Esophagus squamous epithelium (tissue), 5 donors: ENCODE measurements at regions of chr16 and their contacts with region 1.

Region 1: DNA sequence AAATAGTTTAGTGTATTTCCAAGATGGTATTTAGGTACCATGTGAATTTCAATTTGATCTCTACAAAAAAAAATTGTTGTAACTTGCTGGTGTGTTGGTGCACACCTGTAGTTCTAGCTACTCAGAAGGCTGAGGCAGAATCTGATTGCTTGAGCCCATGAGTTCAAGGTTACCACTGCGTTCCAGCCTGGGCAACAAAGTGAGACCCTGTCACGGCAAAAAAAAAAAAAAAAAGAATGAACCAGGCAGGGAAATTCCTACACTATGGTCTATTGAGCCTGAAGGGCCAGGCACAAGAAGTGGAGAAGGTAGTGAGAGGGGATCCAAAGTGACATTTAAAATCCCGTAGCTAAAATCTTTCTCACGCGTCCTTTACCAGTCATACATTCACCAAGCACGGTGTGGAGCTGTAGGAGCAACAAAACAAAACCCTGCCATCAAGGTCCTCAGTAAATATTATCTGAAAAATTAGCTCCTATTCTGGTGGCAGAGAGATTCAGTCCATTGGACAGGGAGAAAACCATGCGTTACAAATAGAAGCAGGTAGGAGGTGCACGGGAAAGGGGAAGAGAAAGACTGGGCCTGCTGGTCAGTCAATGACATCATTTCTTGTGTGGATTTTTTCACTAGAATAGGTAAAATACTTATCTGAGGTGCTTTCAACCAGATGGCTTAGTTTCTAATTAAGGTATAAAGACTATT is 27.3 kb downstream of the TXNDC11 start:
- DNase-seq: no peak
- H3K4me3 ChIP-seq: no peak overlapping the region
- H3K27ac ChIP-seq: no peak overlapping the region
- H3K4me1 ChIP-seq: peaks cover 0 to 23% (median 0%) of the 10 kb centered on the region in 3 donors
- H3K27me3 ChIP-seq: no peaks in the 10 kb centered on the region
- CTCF ChIP-seq: no peak
- POLR2A ChIP-seq: no peak

Region 2: GRCh38 chr16:10964039-10964890 is 751.1 kb before region 1 on chr16:
- intact Hi-C with region 1: loop called (anchors 10 kb)
- DNase-seq: no peak
- H3K4me3 ChIP-seq: no peak overlapping the region
- H3K27ac ChIP-seq: peak overlapping the region in 2 of 4 donors; percentile 32 to 53
- H3K4me1 ChIP-seq: peaks cover 3 to 23% (median 4%) of the 10 kb centered on the region in 3 donors
- H3K27me3 ChIP-seq: no peaks in the 10 kb centered on the region
- CTCF ChIP-seq: peak; percentile 88 to 96 (median 90)
- POLR2A ChIP-seq: no peak

Region 3: DNA sequence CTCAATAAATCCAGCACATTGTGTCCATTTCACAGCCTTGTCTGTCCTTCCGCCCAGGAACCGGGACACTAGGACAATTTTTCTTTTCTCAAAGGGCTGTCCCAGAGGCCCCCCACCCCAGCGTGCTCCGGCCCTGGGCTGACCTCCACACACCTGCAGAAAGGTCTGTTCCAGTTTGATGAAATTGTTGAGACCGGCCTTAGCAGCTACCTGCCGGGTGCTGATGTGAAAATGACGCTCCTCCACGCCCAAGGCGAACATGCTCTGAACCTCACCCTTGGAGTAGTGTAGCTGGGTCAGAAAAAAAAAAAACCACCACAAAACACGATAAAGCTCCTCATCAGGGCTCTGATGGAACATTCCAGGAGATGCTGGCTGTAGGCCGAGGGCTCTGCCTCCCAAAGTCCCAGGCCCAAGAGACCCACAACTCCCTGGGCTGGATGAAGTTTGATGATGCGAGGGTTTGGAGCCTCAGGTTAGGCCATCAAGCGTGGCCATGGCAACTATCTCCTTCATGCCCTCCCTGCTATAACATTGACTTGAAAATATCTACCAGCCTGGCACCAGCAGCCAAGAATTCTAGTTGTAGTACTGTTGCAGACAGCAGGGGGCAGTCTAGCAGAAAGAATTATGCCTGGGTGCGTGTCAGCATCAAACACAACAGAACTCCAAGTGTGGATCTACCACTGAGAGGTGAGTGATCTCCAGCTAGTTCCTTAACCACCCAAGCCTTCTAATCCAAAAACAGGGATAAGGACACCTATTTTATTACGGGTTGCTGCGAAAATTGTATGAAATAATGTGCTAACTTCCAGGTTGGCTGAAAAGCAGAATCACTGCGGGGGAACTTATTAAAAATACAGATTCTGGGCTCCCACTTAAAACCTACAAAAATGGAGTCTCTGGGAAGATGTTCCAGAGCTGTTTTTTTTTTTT is 308.1 kb before region 1 on chr16:
- intact Hi-C with region 1: loop called (anchors 5 kb)
- DNase-seq: no peak
- H3K4me3 ChIP-seq: no peak overlapping the region
- H3K27ac ChIP-seq: no peak overlapping the region
- H3K4me1 ChIP-seq: no peaks in the 10 kb centered on the region
- H3K27me3 ChIP-seq: no peaks in the 10 kb centered on the region
- CTCF ChIP-seq: peak; percentile 40 to 83 (median 76)
- POLR2A ChIP-seq: no peak

Region 4: GRCh38 chr16:11534262-11534661 is 181.1 kb before region 1 on chr16:
- intact Hi-C with region 1: loop called (anchors 5 kb)
- DNase-seq: no peak
- H3K4me3 ChIP-seq: no peak overlapping the region
- H3K27ac ChIP-seq: peak overlapping the region in 1 of 4 donors; percentile 55
- H3K4me1 ChIP-seq: peaks cover 0 to 20% (median 0%) of the 10 kb centered on the region in 3 donors
- H3K27me3 ChIP-seq: no peaks in the 10 kb centered on the region
- CTCF ChIP-seq: no peak
- POLR2A ChIP-seq: no peak

Region 5: GRCh38 chr16:11639925-11640899 is 75.2 kb before region 1 on chr16:
- intact Hi-C with region 1: loop called (anchors 10 kb)
- DNase-seq: no peak
- H3K4me3 ChIP-seq: peak overlapping the region in 1 of 4 donors; percentile 25
- H3K27ac ChIP-seq: peak overlapping the region; percentile 80 to 95 (median 89)
- H3K4me1 ChIP-seq: peaks cover 12 to 40% (median 19%) of the 10 kb centered on the region in 3 donors
- H3K27me3 ChIP-seq: no peaks in the 10 kb centered on the region
- CTCF ChIP-seq: peak in 1 of 6 experiments; percentile 17
- POLR2A ChIP-seq: peak in 2 of 4 donors; percentile 42 to 68